RWPE1 (cell line): ENCODE measurements at regions of chr20 and their contacts with region 1.

Region 1: DNA sequence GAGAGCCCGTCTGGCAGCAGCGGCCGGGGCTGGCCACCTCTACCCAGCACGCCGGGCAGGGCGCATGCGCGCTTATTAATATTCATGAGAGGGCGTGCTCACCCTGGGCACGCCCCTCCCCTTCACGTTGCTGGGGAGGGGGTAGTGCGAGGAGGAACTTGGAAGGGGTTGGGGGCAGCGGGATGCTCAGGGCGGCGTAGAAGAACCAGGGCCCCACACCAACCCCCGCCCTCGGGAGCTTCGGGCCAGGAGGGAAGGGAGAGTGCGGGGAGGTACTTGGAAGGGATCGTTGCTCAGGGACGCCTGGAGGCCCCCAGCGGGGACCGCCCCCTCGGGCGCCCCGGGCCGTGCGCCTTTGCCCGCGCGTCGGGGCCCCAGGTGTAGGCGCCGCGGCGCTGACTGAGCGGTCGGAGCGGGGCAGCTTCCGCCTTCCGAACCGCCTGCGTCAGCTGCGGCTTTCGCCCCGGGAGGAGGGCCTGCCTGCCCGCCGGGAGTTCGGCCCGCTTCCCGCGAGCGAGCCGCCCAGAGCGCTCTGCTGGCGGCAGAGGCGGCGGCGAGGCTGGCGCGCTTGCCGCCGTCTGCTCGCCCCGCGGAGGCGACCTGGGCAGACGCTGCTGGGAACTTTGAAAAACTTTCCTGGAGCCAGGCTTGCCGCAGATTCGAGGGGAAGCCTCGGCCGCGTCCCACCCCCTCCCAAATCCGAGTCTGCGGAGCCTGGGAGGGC is at the start of gene JAG1:
- DNase-seq: peak; percentile 99
- H3K27ac ChIP-seq: peak within 1 kb of the TSS; percentile 99
- CTCF ChIP-seq: no peak

Region 2: DNA sequence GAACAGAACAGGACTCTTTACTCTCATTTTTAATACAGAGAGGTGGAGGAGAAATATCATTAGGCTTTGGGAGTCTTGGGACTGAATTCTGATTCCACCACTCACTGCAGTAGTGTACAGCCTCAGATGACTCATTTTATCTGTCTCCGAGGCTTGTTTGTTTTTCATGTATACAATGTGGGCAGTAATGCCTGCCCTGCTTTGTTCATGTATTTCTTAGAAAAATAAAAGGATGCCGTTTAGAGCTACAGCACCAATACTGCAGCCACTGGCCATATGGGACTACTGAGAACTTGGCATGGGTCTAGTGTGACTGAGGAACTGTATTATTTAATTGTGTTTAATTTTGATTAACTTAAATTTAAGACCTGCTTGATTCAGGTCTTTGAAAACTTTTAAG is 40.9 kb after region 1 on chr20:
- CTCF ChIA-PET with region 1: no interaction called
- POLR2A ChIA-PET with region 1: no interaction called
- DNase-seq: peak; percentile 64
- H3K27ac ChIP-seq: no peak overlapping the region
- CTCF ChIP-seq: no peak

Region 3: GRCh38 chr20:11267131-11267761 is 593.1 kb after region 1 on chr20:
- CTCF ChIA-PET with region 1: interaction called, 11 read pairs
- POLR2A ChIA-PET with region 1: no interaction called
- DNase-seq: peak; percentile 99
- H3K27ac ChIP-seq: peak overlapping the region; percentile 79
- CTCF ChIP-seq: no peak; the same call in 1 of the 2 replicates